Activated CD4-positive, alpha-beta T cell treated with anti-CD3 and anti-CD28 coated beads for 36 hours (primary cell): ENCODE measurements at regions of chr5 and their contacts with region 1.

Region 1: GRCh38 chr5:96601811-96602244 is 60.3 kb upstream of the CAST start:
- DNase-seq: peak; percentile 64
- ATAC-seq: peak; percentile 69
- H3K4me3 Mint-ChIP-seq: no peak overlapping the region
- H3K27ac Mint-ChIP-seq: no peak overlapping the region
- H3K4me1 Mint-ChIP-seq: peaks cover 15% of the 10 kb centered on the region
- H3K27me3 Mint-ChIP-seq: peaks cover 5% of the 10 kb centered on the region

Region 2: DNA sequence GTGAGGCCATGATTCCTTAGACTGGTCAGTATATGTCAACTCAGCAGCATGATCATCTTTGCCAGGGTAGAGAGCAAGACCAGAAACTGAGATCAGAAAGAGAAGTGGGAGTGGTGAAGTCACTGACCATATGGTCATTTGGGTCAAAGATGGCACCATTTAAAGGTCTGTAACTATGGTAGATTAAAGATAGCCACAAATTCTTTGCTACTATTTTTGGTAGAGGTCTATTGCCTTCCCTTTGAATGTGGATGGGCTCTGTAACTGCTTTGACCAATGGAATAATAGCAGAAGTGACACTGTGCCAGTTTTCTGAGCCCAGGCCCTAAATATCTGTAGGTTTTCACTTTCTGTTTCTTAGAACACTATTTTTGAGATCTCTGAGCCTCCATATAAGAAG is 286.4 kb before region 1 on chr5:
- CTCF ChIA-PET with region 1: no interaction called
- POLR2A ChIA-PET with region 1: no interaction called
- intact Hi-C with region 1: no loop called
- DNase-seq: no peak
- ATAC-seq: no peak
- H3K4me3 Mint-ChIP-seq: no peak overlapping the region
- H3K27ac Mint-ChIP-seq: no peak overlapping the region
- H3K4me1 Mint-ChIP-seq: no peaks in the 10 kb centered on the region
- H3K27me3 Mint-ChIP-seq: peaks cover 20% of the 10 kb centered on the region

Region 3: GRCh38 chr5:96588539-96588938 is 13.3 kb before region 1 on chr5:
- CTCF ChIA-PET with region 1: interaction called, 26 read pairs
- POLR2A ChIA-PET with region 1: no interaction called
- intact Hi-C with region 1: no loop called
- DNase-seq: no peak
- ATAC-seq: no peak
- H3K4me3 Mint-ChIP-seq: no peak overlapping the region
- H3K27ac Mint-ChIP-seq: no peak overlapping the region
- H3K4me1 Mint-ChIP-seq: peaks cover 6% of the 10 kb centered on the region
- H3K27me3 Mint-ChIP-seq: peaks cover 23% of the 10 kb centered on the region